A549 (cell line): ENCODE measurements at regions of chr10 and their contacts with region 1.

Region 1: DNA sequence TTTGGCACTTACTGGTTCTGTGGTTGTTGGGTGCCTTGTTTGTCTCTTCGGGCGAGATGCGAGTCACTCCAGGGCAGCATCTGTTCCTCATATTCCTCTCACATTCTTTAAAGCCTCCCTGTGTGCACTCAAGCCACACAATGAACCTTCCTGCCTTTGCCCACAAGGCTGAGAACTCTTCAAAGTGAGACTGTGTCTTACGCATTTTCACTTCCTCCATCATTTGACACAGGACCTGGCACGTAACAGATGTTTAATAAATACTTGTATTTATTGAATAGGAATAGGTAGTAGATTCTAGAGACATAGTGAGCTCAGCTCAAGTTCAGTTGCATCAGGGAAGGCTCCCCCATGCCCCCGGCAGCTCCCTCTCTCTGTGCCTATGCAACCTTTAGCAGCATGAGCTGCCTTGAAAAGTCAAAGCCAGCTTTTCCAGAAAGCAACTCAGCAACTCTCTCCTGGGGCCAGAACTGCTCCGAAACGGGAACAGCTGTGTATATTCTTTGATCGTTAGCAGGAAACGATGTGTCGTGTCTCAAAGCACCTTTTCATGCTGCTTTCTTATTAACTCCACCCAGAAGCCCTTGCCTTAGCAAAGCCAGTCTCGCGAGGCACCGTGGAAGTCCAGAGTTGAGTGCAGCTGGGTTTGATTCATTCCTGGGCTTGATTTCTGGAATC is 97.5 kb downstream of the PFKFB3 start:
- DNase-seq: peak in 1 of 2 experiments; percentile 63
- ATAC-seq: peak in 1 of 2 experiments; percentile 5; a peak in 2 of 6 replicates
- H3K4me3 ChIP-seq: no peak overlapping the region
- H3K27ac ChIP-seq: peak overlapping the region; percentile 88 to 91
- H3K4me1 ChIP-seq: peaks cover 71% of the 10 kb centered on the region
- CTCF ChIP-seq: no peak
- EP300 ChIP-seq: no peak
- POLR2A ChIP-seq: no peak
- RAD21 ChIP-seq: no peak

Region 2: GRCh38 chr10:6314620-6315205 is 14.5 kb after region 1 on chr10:
- CTCF ChIA-PET with region 1: interaction called, 11 read pairs
- POLR2A ChIA-PET with region 1: no interaction called
- DNase-seq: peak; percentile 36 to 85
- ATAC-seq: peak; percentile 70 to 90
- H3K4me3 ChIP-seq: no peak overlapping the region
- H3K27ac ChIP-seq: peak overlapping the region; percentile 80 to 86
- H3K4me1 ChIP-seq: peaks cover 41% of the 10 kb centered on the region
- CTCF ChIP-seq: no peak
- EP300 ChIP-seq: no peak
- POLR2A ChIP-seq: no peak
- RAD21 ChIP-seq: no peak; a peak in 1 of 5 replicates